AG04450 (cell line): ENCODE measurements at regions of chr1 and their contacts with region 1.

Region 1: DNA sequence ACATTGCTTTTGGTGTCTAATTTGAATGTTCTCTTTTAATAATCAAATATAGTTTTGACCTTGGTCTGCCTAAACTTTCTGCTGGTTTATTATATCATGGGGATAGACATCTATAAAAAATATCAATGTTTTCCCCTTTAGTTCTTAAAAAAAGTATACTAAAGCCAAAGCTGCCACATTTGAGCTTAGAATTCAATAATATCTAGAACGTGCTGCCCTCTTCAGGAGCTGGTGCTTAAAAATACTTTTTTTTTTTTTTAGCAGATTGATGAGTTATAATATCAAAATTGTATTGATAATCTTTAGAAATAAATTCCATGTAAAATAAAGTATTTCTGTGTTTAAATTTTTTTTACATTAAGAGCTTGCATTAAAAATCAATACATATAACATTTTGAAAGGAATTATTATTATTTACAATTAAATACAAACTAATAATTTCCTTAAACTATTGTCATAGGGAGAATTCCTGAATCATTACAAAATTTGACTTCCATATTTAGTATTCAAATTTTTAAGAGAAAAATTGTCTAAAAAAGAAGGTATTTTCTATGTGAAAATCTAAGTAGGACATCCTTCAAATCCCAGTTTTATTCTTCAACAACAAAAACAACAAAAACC is 40.1 kb upstream of the ADGRL2 start:
- DNase-seq: peak; percentile 3
- H3K4me3 ChIP-seq: no peak overlapping the region
- H3K27ac ChIP-seq: no peak overlapping the region
- H3K27me3 ChIP-seq: no peaks in the 10 kb centered on the region
- CTCF ChIP-seq: peak; percentile 53

Region 2: GRCh38 chr1:79874289-79874688 is 1886.3 kb before region 1 on chr1:
- CTCF ChIA-PET with region 1: interaction called, 10 read pairs
- POLR2A ChIA-PET with region 1: no interaction called
- DNase-seq: no peak
- H3K4me3 ChIP-seq: no peak overlapping the region
- H3K27ac ChIP-seq: no peak overlapping the region
- H3K27me3 ChIP-seq: no peaks in the 10 kb centered on the region
- CTCF ChIP-seq: no peak